Activated naive CD4-positive, alpha-beta T cell treated with anti-CD3 and anti-CD28 coated beads, Interleukin-2, amount 10 ng/mL, durations not matched to agents 7 days and 5 days (primary cell): ENCODE measurements at regions of chr14 and their contacts with region 1.

Region 1: GRCh38 chr14:50060871-50061663 is 55.3 kb downstream of the VCPKMT start:
- DNase-seq: peak; percentile 61
- H3K4me3 Mint-ChIP-seq: peak overlapping the region; percentile 88
- H3K27ac Mint-ChIP-seq: peak overlapping the region; percentile 100
- H3K4me1 Mint-ChIP-seq: peaks cover 87% of the 10 kb centered on the region
- H3K27me3 Mint-ChIP-seq: no peaks in the 10 kb centered on the region

Region 2: GRCh38 chr14:49862089-49862673 is 198.9 kb before region 1 on chr14:
- CTCF ChIA-PET with region 1: interaction called, 38 read pairs
- DNase-seq: peak; percentile 88
- H3K4me3 Mint-ChIP-seq: no peak overlapping the region
- H3K27ac Mint-ChIP-seq: no peak overlapping the region
- H3K4me1 Mint-ChIP-seq: peaks cover 33% of the 10 kb centered on the region
- H3K27me3 Mint-ChIP-seq: peaks cover 8% of the 10 kb centered on the region

Region 3: DNA sequence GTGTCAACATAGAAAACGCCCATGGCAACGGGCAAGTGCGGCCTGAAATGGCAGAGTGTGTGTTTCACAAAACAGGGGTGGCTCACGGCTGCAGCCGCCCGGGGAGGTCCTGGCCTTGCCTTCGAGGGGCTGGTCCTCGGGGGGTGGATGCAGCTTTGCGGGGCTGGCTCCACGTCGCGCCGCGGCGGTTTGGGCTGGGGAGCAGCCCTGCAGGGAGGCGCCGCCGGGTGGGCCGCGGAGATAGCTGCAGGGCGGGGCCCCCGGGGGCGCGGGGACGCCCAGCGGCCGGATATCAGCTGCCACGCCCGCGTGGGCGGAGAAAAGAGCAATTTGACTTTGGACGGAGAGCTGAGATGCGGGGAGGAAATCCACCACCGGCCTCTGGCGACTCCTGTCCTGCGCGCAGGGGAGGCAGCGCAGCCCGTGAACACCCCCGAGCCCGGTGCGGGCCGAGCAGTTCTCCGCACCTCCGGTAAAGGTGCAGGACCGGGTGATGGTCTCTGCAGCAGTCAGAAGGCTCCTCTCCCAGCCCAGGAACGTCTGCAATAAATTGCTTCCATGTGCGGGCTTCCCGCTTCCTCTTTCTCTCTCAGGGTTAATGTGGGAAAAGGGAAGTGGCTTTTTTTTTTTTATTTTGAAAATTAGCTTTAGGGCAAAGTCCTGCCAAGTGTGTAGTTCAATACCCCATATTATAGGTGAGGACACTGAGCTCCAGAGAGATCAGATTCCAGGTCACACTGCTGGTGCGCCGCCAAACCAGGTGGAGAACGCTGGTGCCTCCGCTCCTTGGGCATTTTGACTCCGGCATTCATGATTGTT is 57.6 kb before region 1 on chr14:
- CTCF ChIA-PET with region 1: interaction called, 50 read pairs
- DNase-seq: peak; percentile 87
- H3K4me3 Mint-ChIP-seq: peak overlapping the region; percentile 78
- H3K27ac Mint-ChIP-seq: peak overlapping the region; percentile 98
- H3K4me1 Mint-ChIP-seq: peaks cover 83% of the 10 kb centered on the region
- H3K27me3 Mint-ChIP-seq: no peaks in the 10 kb centered on the region

Region 4: DNA sequence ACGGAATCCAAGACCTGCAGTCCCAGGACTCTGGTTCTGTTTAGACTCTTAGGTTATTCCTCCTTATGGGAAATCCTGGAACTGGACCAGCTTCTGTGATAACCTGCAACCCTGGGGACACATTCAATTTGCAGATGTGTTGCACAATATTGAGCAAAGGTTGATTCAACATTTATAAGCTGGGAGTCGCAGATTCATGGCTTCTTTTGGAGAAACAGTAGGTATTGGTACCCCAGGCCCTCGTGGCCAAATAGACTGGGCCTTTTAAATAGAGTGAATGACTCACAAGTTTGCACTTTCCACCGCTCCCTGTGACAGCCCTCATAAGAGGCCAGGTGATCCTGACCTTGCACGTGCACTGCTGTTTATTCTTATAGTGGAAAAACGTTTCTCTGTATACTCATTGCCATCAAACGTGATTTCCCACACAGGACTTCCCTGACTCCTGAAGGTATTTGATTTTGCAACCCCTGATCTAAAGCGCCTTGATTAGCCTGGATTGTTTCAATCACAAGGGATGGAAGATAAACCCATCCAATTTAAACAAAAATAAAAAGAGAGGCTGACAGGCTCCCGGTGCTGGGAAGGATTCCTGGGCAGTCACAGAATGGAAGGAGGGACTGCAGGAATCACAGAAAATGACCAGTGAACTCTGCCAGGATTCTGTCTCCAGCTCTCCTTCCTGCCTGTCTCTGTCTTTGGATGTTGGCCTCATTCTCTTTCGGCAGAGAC is 42.7 kb before region 1 on chr14:
- CTCF ChIA-PET with region 1: no interaction called
- DNase-seq: no peak
- H3K4me3 Mint-ChIP-seq: no peak overlapping the region
- H3K27ac Mint-ChIP-seq: no peak overlapping the region
- H3K4me1 Mint-ChIP-seq: peaks cover 59% of the 10 kb centered on the region
- H3K27me3 Mint-ChIP-seq: peaks cover 6% of the 10 kb centered on the region

Region 5: GRCh38 chr14:50045039-50045711 is 15.9 kb before region 1 on chr14:
- CTCF ChIA-PET with region 1: interaction called, 18 read pairs
- DNase-seq: peak; percentile 90
- H3K4me3 Mint-ChIP-seq: peak overlapping the region; percentile 24
- H3K27ac Mint-ChIP-seq: peak overlapping the region; percentile 96
- H3K4me1 Mint-ChIP-seq: peaks cover 75% of the 10 kb centered on the region
- H3K27me3 Mint-ChIP-seq: no peaks in the 10 kb centered on the region

Region 6: GRCh38 chr14:50072395-50072794 is 11.3 kb after region 1 on chr14:
- CTCF ChIA-PET with region 1: no interaction called
- DNase-seq: no peak
- H3K4me3 Mint-ChIP-seq: no peak overlapping the region
- H3K27ac Mint-ChIP-seq: no peak overlapping the region
- H3K4me1 Mint-ChIP-seq: peaks cover 24% of the 10 kb centered on the region
- H3K27me3 Mint-ChIP-seq: no peaks in the 10 kb centered on the region

Region 7: GRCh38 chr14:50099335-50099734 is 38.3 kb after region 1 on chr14:
- CTCF ChIA-PET with region 1: interaction called, 18 read pairs
- DNase-seq: no peak
- H3K4me3 Mint-ChIP-seq: no peak overlapping the region
- H3K27ac Mint-ChIP-seq: no peak overlapping the region
- H3K4me1 Mint-ChIP-seq: peaks cover 82% of the 10 kb centered on the region
- H3K27me3 Mint-ChIP-seq: no peaks in the 10 kb centered on the region